ENCODE measurements at regions of chr22 and their contacts with region 1.

Region 1: GRCh38 chr22:43273902-43274484 is 69.2 kb downstream of the SCUBE1 start:
- DNase-seq: peak; percentile 65 to 75 (median 73)
- H3K4me3 ChIP-seq: no peak overlapping the region
- H3K27ac ChIP-seq: no peak overlapping the region
- H3K4me1 ChIP-seq: peaks cover 0 to 13% (median 6%) of the 10 kb centered on the region in 4 experiments
- H3K27me3 ChIP-seq: no peaks in the 10 kb centered on the region

Region 2: DNA sequence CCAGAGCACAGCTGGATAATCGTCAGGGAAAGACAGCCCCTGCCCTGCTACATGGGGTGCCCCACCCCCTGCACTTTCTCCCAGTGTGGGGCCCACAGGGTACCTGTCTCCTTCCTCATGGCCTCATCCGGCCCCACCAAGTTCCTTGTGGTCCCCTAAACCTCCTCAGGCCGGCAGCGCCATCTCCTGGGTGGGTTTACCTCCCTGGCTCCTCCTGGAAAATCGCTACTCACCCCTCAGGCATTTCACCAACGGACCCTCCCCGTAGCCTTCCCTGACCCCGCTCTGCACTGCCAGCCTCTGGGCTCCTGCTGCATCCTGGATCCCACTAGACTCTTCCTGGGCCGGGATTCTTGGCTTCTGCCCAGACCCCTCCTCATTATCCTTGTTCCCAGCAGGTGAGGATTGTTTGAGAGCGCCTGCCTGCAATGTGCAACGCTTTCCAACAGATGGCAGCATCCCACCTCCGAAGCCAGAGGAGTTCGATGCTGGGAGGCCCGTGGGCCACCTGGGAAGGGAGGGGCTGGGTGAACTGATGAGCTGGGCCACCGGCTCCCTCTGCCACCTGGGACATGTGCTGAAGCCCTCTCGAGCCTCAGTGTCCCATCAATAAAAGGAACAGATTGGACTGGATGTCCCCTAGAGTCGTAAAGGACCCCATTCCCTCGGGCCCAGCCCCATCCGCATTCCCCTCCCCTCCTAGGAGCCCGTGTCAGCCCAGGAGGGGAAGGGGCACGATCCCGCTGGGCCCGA is 42.8 kb before region 1 on chr22:
- CTCF ChIA-PET with region 1: interaction called, 119 read pairs
- POLR2A ChIA-PET with region 1: no interaction called
- DNase-seq: peak; percentile 71 to 82 (median 80)
- H3K4me3 ChIP-seq: peak overlapping the region in 2 of 7 experiments; percentile 10 to 36
- H3K27ac ChIP-seq: no peak overlapping the region
- H3K4me1 ChIP-seq: peaks cover 0 to 21% (median 15%) of the 10 kb centered on the region in 4 experiments
- H3K27me3 ChIP-seq: peaks cover 0 to 2% (median 0%) of the 10 kb centered on the region in 5 experiments

Region 3: DNA sequence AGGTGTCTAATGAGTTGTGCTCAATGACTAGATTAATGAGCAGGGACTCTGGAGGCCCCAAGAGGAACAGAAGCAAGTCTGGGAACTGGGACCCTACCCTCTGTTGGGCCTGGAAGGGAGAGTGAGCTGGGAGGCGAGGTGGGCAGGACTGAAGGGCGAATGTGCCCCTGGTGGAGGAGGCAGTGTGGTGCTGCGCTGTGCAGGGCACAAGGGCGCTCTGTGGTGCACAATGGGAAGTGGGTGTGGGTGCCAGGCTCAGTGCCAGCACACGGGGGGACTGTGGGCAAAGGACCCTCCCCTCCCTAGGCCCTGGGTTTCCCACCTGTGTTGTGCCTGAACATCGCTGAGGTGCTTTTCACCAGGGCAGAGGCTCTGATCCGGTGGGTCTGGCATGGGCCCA is 29.6 kb before region 1 on chr22:
- CTCF ChIA-PET with region 1: interaction called, 11 read pairs
- POLR2A ChIA-PET with region 1: no interaction called
- DNase-seq: peak in 2 of 3 donors; percentile 39 to 66
- H3K4me3 ChIP-seq: no peak overlapping the region
- H3K27ac ChIP-seq: no peak overlapping the region
- H3K4me1 ChIP-seq: peaks cover 0 to 54% (median 23%) of the 10 kb centered on the region in 4 experiments
- H3K27me3 ChIP-seq: no peaks in the 10 kb centered on the region

Region 4: GRCh38 chr22:43263645-43264514 is 10.1 kb before region 1 on chr22:
- CTCF ChIA-PET with region 1: interaction called, 20 read pairs
- POLR2A ChIA-PET with region 1: interaction called, 13 read pairs
- DNase-seq: peak; percentile 99
- H3K4me3 ChIP-seq: peak overlapping the region in 5 of 7 experiments; percentile 21 to 61 (median 50)
- H3K27ac ChIP-seq: peak overlapping the region; percentile 95
- H3K4me1 ChIP-seq: peaks cover 13 to 86% (median 62%) of the 10 kb centered on the region in 4 experiments
- H3K27me3 ChIP-seq: no peaks in the 10 kb centered on the region

Region 5: GRCh38 chr22:43289976-43290721 is 16.2 kb after region 1 on chr22:
- CTCF ChIA-PET with region 1: interaction called, 55 read pairs
- POLR2A ChIA-PET with region 1: no interaction called
- DNase-seq: peak; percentile 27 to 58 (median 50)
- H3K4me3 ChIP-seq: peak overlapping the region in 1 of 7 experiments; percentile 2
- H3K27ac ChIP-seq: no peak overlapping the region
- H3K4me1 ChIP-seq: peaks cover 1 to 33% (median 21%) of the 10 kb centered on the region in 4 experiments
- H3K27me3 ChIP-seq: peaks cover 0 to 1% (median 0%) of the 10 kb centered on the region in 5 experiments

Region 6: GRCh38 chr22:43377896-43378704 is 104.1 kb after region 1 on chr22:
- CTCF ChIA-PET with region 1: interaction called, 59 read pairs
- POLR2A ChIA-PET with region 1: no interaction called
- DNase-seq: peak; percentile 63 to 90 (median 86)
- H3K4me3 ChIP-seq: peak overlapping the region in 3 of 7 experiments; percentile 4 to 54 (median 51)
- H3K27ac ChIP-seq: peak overlapping the region; percentile 23 to 50
- H3K4me1 ChIP-seq: peaks cover 15 to 48% (median 40%) of the 10 kb centered on the region in 4 experiments
- H3K27me3 ChIP-seq: no peaks in the 10 kb centered on the region

Region 7: GRCh38 chr22:43385770-43386641 is 112.0 kb after region 1 on chr22:
- CTCF ChIA-PET with region 1: interaction called, 59 read pairs
- POLR2A ChIA-PET with region 1: no interaction called
- DNase-seq: peak; percentile 74 to 87 (median 86)
- H3K4me3 ChIP-seq: peak overlapping the region in 2 of 7 experiments; percentile 11 to 45
- H3K27ac ChIP-seq: no peak overlapping the region
- H3K4me1 ChIP-seq: peaks cover 0 to 24% (median 19%) of the 10 kb centered on the region in 4 experiments
- H3K27me3 ChIP-seq: peaks cover 0 to 5% (median 0%) of the 10 kb centered on the region in 5 experiments